PC-3 (cell line): ENCODE measurements at regions of chr1 and their contacts with region 1.

Region 1: GRCh38 chr1:228875741-228876140 is 140.5 kb downstream of the RHOU start:
- DNase-seq: no peak
- ATAC-seq: no peak
- H3K4me3 ChIP-seq: no peak overlapping the region
- H3K27ac ChIP-seq: no peak overlapping the region
- H3K4me1 ChIP-seq: no peaks in the 10 kb centered on the region
- H3K27me3 ChIP-seq: peaks cover 80% of the 10 kb centered on the region
- CTCF ChIP-seq: no peak

Region 2: GRCh38 chr1:228830954-228831481 is 44.7 kb before region 1 on chr1:
- CTCF ChIA-PET with region 1: no interaction called
- POLR2A ChIA-PET with region 1: no interaction called
- intact Hi-C with region 1: no loop called
- DNase-seq: peak; percentile 87
- ATAC-seq: peak; percentile 97
- H3K4me3 ChIP-seq: no peak overlapping the region
- H3K27ac ChIP-seq: peak overlapping the region; percentile 30
- H3K4me1 ChIP-seq: peaks cover 32% of the 10 kb centered on the region
- H3K27me3 ChIP-seq: peaks cover 40% of the 10 kb centered on the region
- CTCF ChIP-seq: no peak

Region 3: DNA sequence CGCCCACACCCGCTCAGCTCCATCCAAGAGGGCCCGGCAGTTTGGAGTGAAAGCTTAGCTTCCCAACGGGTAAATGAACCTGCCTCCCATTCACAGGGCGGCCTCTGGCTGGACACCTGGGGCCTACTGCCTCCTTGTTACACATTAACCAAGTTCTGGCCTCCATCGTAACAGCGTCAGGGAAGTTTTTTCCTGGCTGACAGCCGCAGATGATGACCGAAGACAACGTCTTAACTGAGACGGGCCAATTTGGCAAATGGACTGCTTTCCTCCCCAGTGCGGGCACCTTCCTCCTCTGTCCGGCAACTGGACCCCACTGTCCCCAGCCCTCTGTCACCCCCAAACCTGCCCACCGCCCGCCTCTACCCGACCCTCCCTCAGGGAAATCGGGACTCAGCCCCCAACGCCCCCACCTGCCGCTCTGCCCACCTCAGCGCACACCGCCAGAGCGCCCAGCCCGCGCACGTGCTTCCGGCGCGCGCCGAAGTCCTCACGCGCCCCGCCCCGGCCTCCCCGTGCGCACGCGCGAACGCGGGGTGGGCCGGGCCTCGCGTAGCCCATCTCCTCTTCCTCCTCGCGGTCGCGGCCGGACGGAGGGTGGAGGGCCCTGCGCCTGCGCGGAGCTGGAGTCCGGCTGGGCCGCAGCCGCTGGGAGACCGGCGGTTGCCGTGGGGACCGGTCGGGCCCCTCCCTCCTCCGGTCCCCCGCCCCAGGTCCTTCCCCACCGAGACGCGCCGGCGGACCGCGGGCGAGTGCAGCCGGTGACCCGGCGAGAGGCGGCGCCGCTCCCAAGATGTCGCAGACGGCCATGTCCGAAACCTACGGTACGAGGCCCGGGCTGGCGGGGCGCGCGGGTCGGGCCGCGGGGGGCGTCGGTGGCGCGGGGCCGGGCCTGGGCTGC is 395.1 kb after region 1 on chr1 and contains the start of gene RAB4A:
- CTCF ChIA-PET with region 1: no interaction called
- POLR2A ChIA-PET with region 1: interaction called, 11 read pairs
- intact Hi-C with region 1: no loop called
- DNase-seq: peak; percentile 89
- ATAC-seq: peak; percentile 79
- H3K4me3 ChIP-seq: peak within 1 kb of the TSS; percentile 84
- H3K27ac ChIP-seq: no peak within 1 kb of the TSS
- H3K4me1 ChIP-seq: peaks cover 27% of the 10 kb centered on the region
- H3K27me3 ChIP-seq: no peaks in the 10 kb centered on the region
- CTCF ChIP-seq: no peak
- total RNA-seq, gene RAB4A: 33.9 and 67.0 TPM in 2 replicates